SK-N-SH (cell line): ENCODE measurements at regions of chr10 and their contacts with region 1.

Region 1: GRCh38 chr10:119207367-119207668 is at the start of gene GRK5:
- DNase-seq: peak; percentile 98
- H3K4me3 ChIP-seq: peak within 1 kb of the TSS; percentile 91
- H3K27ac ChIP-seq: peak within 1 kb of the TSS; percentile 67 to 98
- H3K4me1 ChIP-seq: peaks cover 30 to 32% of the 10 kb centered on the region in 2 experiments
- H3K27me3 ChIP-seq: no peaks in the 10 kb centered on the region
- CTCF ChIP-seq: no peak
- EP300 ChIP-seq: no peak
- RAD21 ChIP-seq: no peak
- polyA plus RNA-seq, gene GRK5: 9.5 and 12.1 TPM in 2 replicates

Region 2: GRCh38 chr10:119217991-119218490 is 10.7 kb after region 1 on chr10:
- CTCF ChIA-PET with region 1: interaction called, 38 read pairs
- POLR2A ChIA-PET with region 1: interaction called, 7 read pairs
- DNase-seq: no peak
- H3K4me3 ChIP-seq: no peak overlapping the region
- H3K27ac ChIP-seq: no peak overlapping the region
- H3K4me1 ChIP-seq: peaks cover 7 to 35% of the 10 kb centered on the region in 2 experiments; a peak in 3 of 4 replicates
- H3K27me3 ChIP-seq: no peaks in the 10 kb centered on the region
- CTCF ChIP-seq: no peak
- EP300 ChIP-seq: no peak
- RAD21 ChIP-seq: no peak

Region 3: DNA sequence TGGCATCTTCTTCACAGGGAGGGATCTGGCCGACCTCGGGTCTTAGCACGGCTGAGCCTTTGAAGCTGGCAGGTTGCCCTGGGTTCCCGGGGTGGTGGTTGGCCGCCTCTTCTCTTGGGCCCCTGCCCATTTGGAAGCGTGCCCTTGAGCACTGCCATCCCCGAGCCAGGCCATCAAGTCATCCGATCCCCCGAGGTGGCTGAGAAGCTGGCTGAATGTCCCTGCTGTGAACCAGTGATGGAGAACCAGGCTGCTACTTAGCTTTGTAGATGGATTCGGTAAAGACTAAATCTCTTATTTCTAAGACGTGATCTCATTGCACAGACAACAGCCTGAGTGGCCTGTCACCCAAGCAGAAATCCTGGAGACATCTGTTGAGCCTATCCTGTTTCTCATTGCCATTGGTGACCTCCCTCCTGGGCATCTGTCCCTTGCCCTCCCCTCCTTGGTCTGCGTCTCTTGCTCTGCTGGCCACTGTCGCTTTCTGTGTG is 74.3 kb after region 1 on chr10:
- CTCF ChIA-PET with region 1: interaction called, 11 read pairs
- POLR2A ChIA-PET with region 1: interaction called, 4 read pairs
- DNase-seq: peak; percentile 90
- H3K4me3 ChIP-seq: no peak overlapping the region
- H3K27ac ChIP-seq: peak overlapping the region in 1 of 2 experiments; percentile 26; a peak in 1 of 4 replicates
- H3K4me1 ChIP-seq: peaks cover 28 to 61% of the 10 kb centered on the region in 2 experiments; a peak in 3 of 4 replicates
- H3K27me3 ChIP-seq: no peaks in the 10 kb centered on the region
- CTCF ChIP-seq: no peak
- EP300 ChIP-seq: peak in 1 of 2 experiments; percentile 33; a peak in 1 of 4 replicates
- RAD21 ChIP-seq: peak; percentile 22; the same call in 1 of the 2 replicates

Region 4: DNA sequence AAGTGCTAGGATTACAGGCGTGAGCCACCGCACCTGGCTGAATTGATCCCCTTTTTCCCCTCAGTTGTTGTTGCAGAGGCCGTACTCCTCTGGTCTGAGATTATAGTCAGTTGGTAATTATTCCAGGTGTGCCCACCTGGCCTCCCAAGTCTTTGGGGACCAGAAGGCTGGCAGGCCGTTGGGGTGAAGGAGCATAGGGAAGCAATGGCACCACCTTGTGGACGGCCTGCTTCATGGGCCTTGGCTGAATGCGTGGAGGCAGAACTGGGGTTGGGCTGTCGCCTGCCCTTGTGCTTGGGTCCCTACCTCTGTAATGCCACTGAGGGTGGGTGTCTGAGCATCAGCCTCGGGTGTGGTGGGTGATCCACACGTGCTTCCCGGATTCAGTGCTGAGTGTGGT is 209.5 kb after region 1 on chr10:
- CTCF ChIA-PET with region 1: interaction called, 119 read pairs
- POLR2A ChIA-PET with region 1: interaction called, 4 read pairs
- DNase-seq: peak; percentile 80
- H3K4me3 ChIP-seq: no peak overlapping the region
- H3K27ac ChIP-seq: no peak overlapping the region
- H3K4me1 ChIP-seq: peaks cover 7 to 66% of the 10 kb centered on the region in 2 experiments; a peak in 2 of 4 replicates
- H3K27me3 ChIP-seq: no peaks in the 10 kb centered on the region
- CTCF ChIP-seq: peak; percentile 81
- EP300 ChIP-seq: no peak
- RAD21 ChIP-seq: peak; percentile 87

Region 5: DNA sequence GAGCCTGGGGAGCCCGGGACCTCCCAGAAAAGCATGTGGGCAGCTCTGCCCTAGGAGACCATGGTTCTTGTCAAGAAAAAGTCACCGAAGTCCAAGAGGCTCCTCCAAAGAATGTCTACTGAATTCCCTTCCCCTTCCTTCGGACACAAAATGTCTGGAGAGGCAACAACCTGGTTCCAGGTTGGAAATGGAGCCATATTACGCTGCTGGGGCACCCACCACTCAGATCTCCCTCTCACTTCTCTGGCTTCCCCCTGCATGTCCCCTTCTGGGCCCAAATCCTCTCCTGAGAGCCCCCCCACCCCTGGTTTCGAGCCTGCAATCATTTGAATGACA is 282.6 kb after region 1 on chr10:
- CTCF ChIA-PET with region 1: interaction called, 18 read pairs
- POLR2A ChIA-PET with region 1: no interaction called
- DNase-seq: no peak
- H3K4me3 ChIP-seq: no peak overlapping the region
- H3K27ac ChIP-seq: no peak overlapping the region
- H3K4me1 ChIP-seq: no peaks in the 10 kb centered on the region; a peak in 1 of 4 replicates
- H3K27me3 ChIP-seq: no peaks in the 10 kb centered on the region
- CTCF ChIP-seq: no peak; the same call in 1 of the 2 replicates
- EP300 ChIP-seq: no peak
- RAD21 ChIP-seq: no peak

Region 6: GRCh38 chr10:119625570-119626280 is 418.4 kb after region 1 on chr10:
- CTCF ChIA-PET with region 1: no interaction called
- POLR2A ChIA-PET with region 1: no interaction called
- DNase-seq: no peak
- H3K4me3 ChIP-seq: no peak overlapping the region
- H3K27ac ChIP-seq: no peak overlapping the region
- H3K4me1 ChIP-seq: peaks cover 0 to 2% of the 10 kb centered on the region in 2 experiments; a peak in 2 of 4 replicates
- H3K27me3 ChIP-seq: no peaks in the 10 kb centered on the region
- CTCF ChIP-seq: no peak
- EP300 ChIP-seq: no peak
- RAD21 ChIP-seq: no peak